Caco-2 (cell line): ENCODE measurements at regions of chr2 and their contacts with region 1.

Region 1: DNA sequence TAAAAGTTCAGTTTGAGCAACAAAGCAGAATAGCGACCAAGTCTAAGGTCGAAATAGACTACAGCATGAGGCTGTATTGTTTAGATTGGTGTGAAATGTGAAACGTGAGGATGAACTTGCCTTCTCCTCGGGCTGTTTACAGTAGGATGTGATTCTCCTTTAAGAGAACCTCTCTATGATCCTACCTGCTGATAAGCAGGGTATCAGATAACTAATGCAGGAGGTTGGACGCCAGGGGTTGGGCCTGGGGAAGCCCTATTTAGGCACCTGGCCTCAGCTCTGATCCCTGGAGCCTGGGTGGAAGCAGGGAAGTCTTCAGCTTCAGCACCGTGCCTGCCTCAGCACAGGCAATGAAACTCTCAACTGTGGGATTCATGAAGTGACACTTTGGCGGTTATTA is 11.4 kb downstream of the CRYGD start:
- DNase-seq: peak; percentile 74 to 81
- H3K4me3 ChIP-seq: no peak overlapping the region
- H3K4me3 Mint-ChIP-seq: peak overlapping the region; percentile 62
- H3K27ac Mint-ChIP-seq: no peak overlapping the region
- H3K4me1 ChIP-seq: peaks cover 42% of the 10 kb centered on the region
- H3K4me1 Mint-ChIP-seq: peaks cover 24% of the 10 kb centered on the region
- H3K27me3 ChIP-seq: no peaks in the 10 kb centered on the region
- H3K27me3 Mint-ChIP-seq: no peaks in the 10 kb centered on the region
- CTCF ChIP-seq: no peak

Region 2: GRCh38 chr2:208129744-208130711 is 17.1 kb after region 1 on chr2 and contains the start of gene CRYGC:
- CTCF ChIA-PET with region 1: interaction called, 6 read pairs
- POLR2A ChIA-PET with region 1: no interaction called
- intact Hi-C with region 1: loop called (anchors 2 kb)
- DNase-seq: peak; percentile 57 to 80
- H3K4me3 ChIP-seq: no peak within 1 kb of the TSS
- H3K4me3 Mint-ChIP-seq: peak within 1 kb of the TSS; percentile 10
- H3K27ac Mint-ChIP-seq: peak within 1 kb of the TSS; percentile 56
- H3K4me1 ChIP-seq: peaks cover 42% of the 10 kb centered on the region
- H3K4me1 Mint-ChIP-seq: peaks cover 37% of the 10 kb centered on the region
- H3K27me3 ChIP-seq: no peaks in the 10 kb centered on the region
- H3K27me3 Mint-ChIP-seq: no peaks in the 10 kb centered on the region
- CTCF ChIP-seq: no peak
- total RNA-seq, gene CRYGC: not detected in 2 replicates